B cell (primary cell): ENCODE measurements at regions of chr1 and their contacts with region 1.

Region 1: GRCh38 chr1:181128592-181129497 is 40.3 kb downstream of the IER5 start:
- DNase-seq: peak; percentile 82
- ATAC-seq: peak; percentile 73
- H3K4me3 ChIP-seq: peak overlapping the region; percentile 18 to 66 (median 50)
- H3K4me3 Mint-ChIP-seq: peak overlapping the region; percentile 92
- H3K27ac ChIP-seq: peak overlapping the region; percentile 86 to 91
- H3K27ac Mint-ChIP-seq: peak overlapping the region; percentile 93
- H3K4me1 ChIP-seq: peaks cover 79 to 85% of the 10 kb centered on the region in 2 donors
- H3K4me1 Mint-ChIP-seq: peaks cover 84% of the 10 kb centered on the region
- H3K27me3 ChIP-seq: no peaks in the 10 kb centered on the region
- H3K27me3 Mint-ChIP-seq: no peaks in the 10 kb centered on the region
- CTCF ChIP-seq: no peak

Region 2: GRCh38 chr1:181062836-181063428 is 65.9 kb before region 1 on chr1:
- CTCF ChIA-PET with region 1: interaction called, 3 read pairs
- POLR2A ChIA-PET with region 1: no interaction called
- intact Hi-C with region 1: loop called (anchors 1 kb)
- DNase-seq: no peak
- ATAC-seq: peak; percentile 53
- H3K4me3 ChIP-seq: peak overlapping the region in 4 of 5 experiments; percentile 15 to 53 (median 38)
- H3K4me3 Mint-ChIP-seq: peak overlapping the region; percentile 81
- H3K27ac ChIP-seq: peak overlapping the region; percentile 76 to 78
- H3K27ac Mint-ChIP-seq: peak overlapping the region; percentile 95
- H3K4me1 ChIP-seq: peaks cover 19 to 27% of the 10 kb centered on the region in 2 donors
- H3K4me1 Mint-ChIP-seq: peaks cover 31% of the 10 kb centered on the region
- H3K27me3 ChIP-seq: no peaks in the 10 kb centered on the region
- H3K27me3 Mint-ChIP-seq: no peaks in the 10 kb centered on the region
- CTCF ChIP-seq: no peak